ENCODE measurements at regions of chr3 and their contacts with region 1.

Region 1: DNA sequence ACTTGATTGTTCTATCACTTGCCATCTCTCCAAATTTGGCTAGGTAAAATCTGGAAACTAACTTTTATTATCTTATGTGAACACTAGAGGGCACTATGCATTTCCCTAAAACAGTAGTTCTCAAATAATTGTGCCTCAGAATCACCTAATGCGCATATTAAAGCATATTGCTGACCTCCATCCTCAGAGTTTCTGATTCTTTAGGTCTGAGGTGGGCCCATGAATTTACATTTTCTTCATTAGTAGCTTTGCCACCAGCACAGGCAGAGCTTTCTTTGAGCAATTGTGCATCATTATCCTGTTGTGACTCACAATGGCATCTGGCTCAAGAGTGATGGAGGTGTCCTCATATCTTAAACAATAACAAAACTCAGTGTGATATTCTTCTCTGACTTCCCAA is 17.5 kb upstream of the BCHE start:
- DNase-seq: no peak
- ATAC-seq: peak; percentile 48
- H3K4me3 ChIP-seq: no peak overlapping the region
- H3K27ac ChIP-seq: no peak overlapping the region
- H3K4me1 ChIP-seq: no peaks in the 10 kb centered on the region
- H3K27me3 ChIP-seq: no peaks in the 10 kb centered on the region
- CTCF ChIP-seq: peak; percentile 35 to 50 (median 48); a peak in 4 of 6 replicates
- EP300 ChIP-seq: no peak
- POLR2A ChIP-seq: no peak
- RAD21 ChIP-seq: 0 out of 2 replicates have a peak, but pooled peaks have one; percentile 20

Region 2: DNA sequence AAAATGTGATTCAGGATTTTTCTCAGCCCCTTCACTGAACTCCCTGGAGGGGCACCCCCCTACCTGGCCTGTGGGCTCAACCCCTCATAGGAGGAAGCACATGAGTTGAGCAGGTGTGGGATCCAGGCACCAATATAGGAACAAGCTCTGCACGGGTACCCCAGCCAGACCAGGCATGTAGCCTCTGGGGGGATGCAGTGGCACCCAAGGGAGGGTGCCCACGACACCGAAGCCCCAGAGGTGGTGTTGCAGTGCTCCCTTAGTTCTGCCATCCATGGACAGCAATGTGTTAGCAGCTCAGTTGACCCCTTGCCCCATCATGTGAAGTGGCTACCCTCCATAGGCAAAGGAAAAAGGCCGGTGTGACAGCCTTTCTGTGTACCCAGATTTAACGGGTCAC is 13.4 kb after region 1 on chr3:
- CTCF ChIA-PET with region 1: interaction called, 45 read pairs
- POLR2A ChIA-PET with region 1: no interaction called
- RAD21 ChIA-PET with region 1: interaction called, 3 read pairs
- SMC1A ChIA-PET with region 1: interaction called, 15 read pairs
- in situ Hi-C with region 1: no loop called
- intact Hi-C with region 1: no loop called
- DNase-seq: no peak
- ATAC-seq: no peak; the same call in 2 of the 3 replicates
- H3K4me3 ChIP-seq: no peak overlapping the region
- H3K27ac ChIP-seq: no peak overlapping the region
- H3K4me1 ChIP-seq: no peaks in the 10 kb centered on the region
- H3K27me3 ChIP-seq: no peaks in the 10 kb centered on the region
- CTCF ChIP-seq: no peak
- EP300 ChIP-seq: no peak
- POLR2A ChIP-seq: no peak
- RAD21 ChIP-seq: no peak

Region 3: DNA sequence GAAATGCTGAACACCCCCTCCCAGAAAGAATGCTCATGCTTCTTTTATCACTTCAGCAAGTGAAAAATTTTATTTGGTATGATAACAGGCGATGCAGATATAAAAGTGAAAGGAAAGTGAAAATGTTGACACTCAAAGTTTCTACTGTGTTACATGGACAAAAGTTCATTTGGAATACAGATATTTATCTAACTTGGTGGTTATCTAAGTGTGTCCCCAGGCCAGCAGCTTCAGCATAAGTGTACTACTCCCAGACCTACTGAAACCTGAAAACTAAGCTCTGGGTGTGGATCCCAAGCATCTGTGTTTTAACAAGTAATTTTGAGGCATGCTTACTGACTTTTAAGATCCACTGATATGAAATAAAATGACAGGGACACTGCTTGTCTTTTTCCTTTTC is 139.6 kb after region 1 on chr3:
- CTCF ChIA-PET with region 1: no interaction called
- POLR2A ChIA-PET with region 1: no interaction called
- RAD21 ChIA-PET with region 1: no interaction called
- SMC1A ChIA-PET with region 1: no interaction called
- in situ Hi-C with region 1: no loop called
- intact Hi-C with region 1: no loop called
- DNase-seq: no peak
- ATAC-seq: no peak
- H3K4me3 ChIP-seq: no peak overlapping the region
- H3K27ac ChIP-seq: no peak overlapping the region
- H3K4me1 ChIP-seq: no peaks in the 10 kb centered on the region
- H3K27me3 ChIP-seq: no peaks in the 10 kb centered on the region
- CTCF ChIP-seq: no peak
- EP300 ChIP-seq: no peak
- POLR2A ChIP-seq: no peak
- RAD21 ChIP-seq: no peak

Region 4: GRCh38 chr3:166243511-166243910 is 388.8 kb after region 1 on chr3:
- CTCF ChIA-PET with region 1: no interaction called
- POLR2A ChIA-PET with region 1: no interaction called
- RAD21 ChIA-PET with region 1: no interaction called
- SMC1A ChIA-PET with region 1: no interaction called
- in situ Hi-C with region 1: no loop called
- intact Hi-C with region 1: no loop called
- DNase-seq: no peak
- ATAC-seq: no peak
- H3K4me3 ChIP-seq: no peak overlapping the region
- H3K27ac ChIP-seq: no peak overlapping the region
- H3K4me1 ChIP-seq: no peaks in the 10 kb centered on the region
- H3K27me3 ChIP-seq: no peaks in the 10 kb centered on the region
- CTCF ChIP-seq: no peak
- EP300 ChIP-seq: no peak
- POLR2A ChIP-seq: no peak
- RAD21 ChIP-seq: no peak